CD8-positive, alpha-beta T cell (primary cell): ENCODE measurements at regions of chr14 and their contacts with region 1.

Region 1: DNA sequence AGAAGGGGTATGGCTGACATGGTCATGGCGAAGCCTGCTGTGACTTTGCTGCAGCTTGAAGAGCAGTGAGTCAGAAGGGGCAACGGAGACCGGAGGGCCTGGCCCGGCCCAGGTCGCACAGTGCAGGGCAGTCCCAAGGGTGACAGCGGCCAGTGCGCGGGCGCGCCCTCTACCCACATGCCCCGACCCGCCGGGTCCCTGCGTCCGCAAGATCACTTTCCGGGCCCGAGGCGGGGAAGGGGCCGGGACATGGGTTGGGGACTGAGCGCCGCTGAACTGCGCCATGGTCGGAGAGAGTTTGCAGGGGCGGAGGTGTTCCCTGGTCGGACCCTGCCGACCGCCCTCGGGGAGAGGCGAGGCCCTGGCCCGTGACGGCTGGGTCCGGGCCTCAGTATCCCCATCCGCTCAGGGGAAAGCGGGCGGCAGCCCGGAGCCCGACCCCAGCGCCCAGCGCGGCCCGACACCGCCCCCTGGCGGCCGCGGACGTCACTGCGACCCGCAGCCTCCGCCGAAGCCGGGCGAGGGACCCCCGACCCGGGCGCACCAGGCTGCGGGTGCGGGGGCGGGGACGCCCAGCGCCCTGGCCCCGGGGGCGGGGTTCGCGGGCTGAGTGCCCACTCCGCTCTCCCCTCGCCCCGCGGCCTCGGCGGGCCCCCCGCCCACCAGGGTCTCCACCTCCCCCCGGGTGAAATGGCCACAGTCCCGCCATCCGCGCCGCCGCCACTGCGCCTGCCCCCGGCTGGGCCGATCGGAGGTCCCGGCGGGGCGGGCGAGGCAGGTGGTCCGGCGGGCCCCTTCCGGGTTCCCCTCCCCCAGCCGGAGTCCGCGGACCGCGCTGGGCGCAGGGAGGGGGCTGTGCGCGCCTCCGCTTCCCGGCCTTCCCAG is 7.2 kb upstream of the ANKRD9 start:
- DNase-seq: peak; percentile 33 to 81 (median 60)
- ATAC-seq: peak; percentile 93
- H3K4me3 ChIP-seq: peak overlapping the region; percentile 51
- H3K4me3 Mint-ChIP-seq: peak overlapping the region; percentile 83
- H3K27ac ChIP-seq: no peak overlapping the region
- H3K27ac Mint-ChIP-seq: no peak overlapping the region
- H3K4me1 ChIP-seq: peaks cover 5% of the 10 kb centered on the region
- H3K4me1 Mint-ChIP-seq: peaks cover 5% of the 10 kb centered on the region
- H3K27me3 ChIP-seq: peaks cover 0 to 3% of the 10 kb centered on the region in 2 experiments
- H3K27me3 Mint-ChIP-seq: peaks cover 4% of the 10 kb centered on the region
- CTCF ChIP-seq: peak; percentile 85

Region 2: GRCh38 chr14:101772817-101773216 is 744.0 kb before region 1 on chr14:
- CTCF ChIA-PET with region 1: no interaction called
- POLR2A ChIA-PET with region 1: no interaction called
- intact Hi-C with region 1: no loop called
- DNase-seq: no peak
- ATAC-seq: no peak
- H3K4me3 ChIP-seq: no peak overlapping the region
- H3K4me3 Mint-ChIP-seq: no peak overlapping the region
- H3K27ac ChIP-seq: no peak overlapping the region
- H3K27ac Mint-ChIP-seq: no peak overlapping the region
- H3K4me1 ChIP-seq: no peaks in the 10 kb centered on the region
- H3K4me1 Mint-ChIP-seq: peaks cover 31% of the 10 kb centered on the region
- H3K27me3 ChIP-seq: no peaks in the 10 kb centered on the region
- H3K27me3 Mint-ChIP-seq: no peaks in the 10 kb centered on the region
- CTCF ChIP-seq: no peak

Region 3: GRCh38 chr14:102235275-102235897 is 281.4 kb before region 1 on chr14:
- CTCF ChIA-PET with region 1: no interaction called
- POLR2A ChIA-PET with region 1: no interaction called
- intact Hi-C with region 1: loop called in 1 of 2 experiments (anchors 2 kb)
- DNase-seq: peak; percentile 45 to 81 (median 77)
- ATAC-seq: peak; percentile 99
- H3K4me3 ChIP-seq: no peak overlapping the region
- H3K4me3 Mint-ChIP-seq: no peak overlapping the region
- H3K27ac ChIP-seq: no peak overlapping the region
- H3K27ac Mint-ChIP-seq: no peak overlapping the region
- H3K4me1 ChIP-seq: no peaks in the 10 kb centered on the region
- H3K4me1 Mint-ChIP-seq: no peaks in the 10 kb centered on the region
- H3K27me3 ChIP-seq: no peaks in the 10 kb centered on the region
- H3K27me3 Mint-ChIP-seq: no peaks in the 10 kb centered on the region
- CTCF ChIP-seq: peak; percentile 73

Region 4: GRCh38 chr14:102362545-102363181 is 154.1 kb before region 1 on chr14 and contains the starts of genes CINP and TECPR2:
- CTCF ChIA-PET with region 1: no interaction called
- POLR2A ChIA-PET with region 1: no interaction called
- intact Hi-C with region 1: loop called (anchors 2 to 5 kb)
- DNase-seq: peak; percentile 93 to 97 (median 96)
- ATAC-seq: peak; percentile 90
- H3K4me3 ChIP-seq: peak within 1 kb of the TSS; percentile 67 to 75
- H3K4me3 Mint-ChIP-seq: peak within 1 kb of the TSS; percentile 95
- H3K27ac ChIP-seq: peak within 1 kb of the TSS; percentile 82 to 86
- H3K27ac Mint-ChIP-seq: peak within 1 kb of the TSS; percentile 96
- H3K4me1 ChIP-seq: peaks cover 15% of the 10 kb centered on the region
- H3K4me1 Mint-ChIP-seq: peaks cover 24% of the 10 kb centered on the region
- H3K27me3 ChIP-seq: no peaks in the 10 kb centered on the region
- H3K27me3 Mint-ChIP-seq: no peaks in the 10 kb centered on the region
- CTCF ChIP-seq: no peak
- total RNA-seq, gene CINP: 15.9 to 19.2 TPM
- total RNA-seq, gene TECPR2: 3.4 to 5.8 TPM

Region 5: DNA sequence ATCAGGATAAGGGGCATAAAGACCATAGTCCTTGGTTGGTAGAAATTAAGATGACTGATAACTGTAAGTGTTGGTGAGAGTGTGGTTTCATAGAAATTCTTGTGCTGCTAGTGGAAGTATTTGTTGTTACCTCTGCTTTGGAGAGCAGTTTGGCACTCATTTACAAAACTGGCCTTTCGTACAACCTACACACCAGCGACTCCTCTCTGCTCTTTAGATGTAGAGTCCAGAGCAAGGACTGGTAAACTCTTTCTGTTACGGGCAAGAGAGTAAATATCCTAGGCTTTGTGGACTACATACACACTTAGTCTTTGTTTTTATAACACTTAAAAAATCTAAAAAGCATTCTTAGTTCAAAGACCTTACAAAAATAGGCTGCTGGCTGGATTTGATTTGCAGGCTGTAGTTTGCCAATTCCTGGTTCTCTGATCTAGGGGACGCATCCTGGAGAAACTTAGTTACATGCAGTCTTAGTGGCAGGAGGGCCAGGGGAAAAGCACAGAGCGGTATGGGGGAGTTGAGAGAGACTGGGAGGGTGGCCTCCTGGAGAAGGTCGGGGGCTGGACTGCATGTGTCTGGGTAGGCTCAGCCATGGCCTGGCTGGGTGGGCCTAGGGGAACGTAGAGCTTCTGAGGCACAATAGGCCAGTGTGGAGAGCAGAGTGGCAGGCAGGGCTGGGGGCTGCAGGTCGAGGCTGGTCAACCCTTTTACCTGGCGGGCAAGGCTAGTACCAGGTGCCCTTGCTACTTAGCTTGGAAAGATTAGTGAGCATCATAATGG is 350.4 kb after region 1 on chr14:
- CTCF ChIA-PET with region 1: no interaction called
- POLR2A ChIA-PET with region 1: no interaction called
- intact Hi-C with region 1: no loop called
- DNase-seq: no peak
- ATAC-seq: no peak
- H3K4me3 ChIP-seq: no peak overlapping the region
- H3K4me3 Mint-ChIP-seq: no peak overlapping the region
- H3K27ac ChIP-seq: no peak overlapping the region
- H3K27ac Mint-ChIP-seq: no peak overlapping the region
- H3K4me1 ChIP-seq: no peaks in the 10 kb centered on the region
- H3K4me1 Mint-ChIP-seq: peaks cover under 1% of the 10 kb centered on the region
- H3K27me3 ChIP-seq: no peaks in the 10 kb centered on the region
- H3K27me3 Mint-ChIP-seq: no peaks in the 10 kb centered on the region
- CTCF ChIP-seq: no peak

Region 6: GRCh38 chr14:102957222-102957621 is 440.4 kb after region 1 on chr14:
- CTCF ChIA-PET with region 1: no interaction called
- POLR2A ChIA-PET with region 1: no interaction called
- intact Hi-C with region 1: no loop called
- DNase-seq: no peak
- ATAC-seq: no peak
- H3K4me3 ChIP-seq: no peak overlapping the region
- H3K4me3 Mint-ChIP-seq: no peak overlapping the region
- H3K27ac ChIP-seq: no peak overlapping the region
- H3K27ac Mint-ChIP-seq: no peak overlapping the region
- H3K4me1 ChIP-seq: no peaks in the 10 kb centered on the region
- H3K4me1 Mint-ChIP-seq: no peaks in the 10 kb centered on the region
- H3K27me3 ChIP-seq: no peaks in the 10 kb centered on the region
- H3K27me3 Mint-ChIP-seq: no peaks in the 10 kb centered on the region
- CTCF ChIP-seq: no peak